Calu3 (cell line): ENCODE measurements at regions of chr19 and their contacts with region 1.

Region 1: DNA sequence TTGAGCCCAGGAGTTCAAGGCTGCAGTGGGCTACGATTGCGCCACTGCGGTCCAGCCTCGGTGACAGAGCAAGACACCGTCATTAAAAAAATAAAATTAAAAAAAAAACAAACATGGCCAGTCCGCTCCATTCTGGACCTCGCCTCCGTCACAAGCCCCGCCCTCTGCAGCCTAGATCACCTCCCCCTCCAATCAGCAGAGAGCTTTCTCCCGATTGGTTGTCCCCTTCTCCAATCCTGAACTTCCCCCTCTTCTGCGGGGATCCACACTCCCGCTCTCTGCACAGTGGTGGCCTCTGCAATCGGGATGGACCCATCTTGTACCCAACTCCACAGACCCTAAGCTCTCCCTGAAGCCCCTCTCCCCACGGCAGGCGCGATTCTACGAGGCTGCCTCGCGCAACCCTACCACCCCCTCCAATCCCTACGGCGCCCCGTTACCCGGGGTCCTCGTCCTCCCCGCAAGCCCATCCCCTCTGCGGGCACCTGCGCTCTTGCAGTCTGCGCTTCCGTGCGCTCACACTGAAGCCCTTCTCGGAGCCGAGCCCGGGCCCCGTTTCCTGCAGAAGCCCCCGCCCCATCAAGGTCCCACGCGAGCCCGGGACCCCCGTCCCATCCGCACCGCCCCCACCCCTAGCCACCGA is 540 bp downstream of the TMEM160 start:
- DNase-seq: peak; percentile 92
- H3K4me3 Mint-ChIP-seq: peak overlapping the region; percentile 93
- H3K27ac Mint-ChIP-seq: peak overlapping the region; percentile 89
- H3K4me1 Mint-ChIP-seq: no peaks in the 10 kb centered on the region
- H3K27me3 Mint-ChIP-seq: peaks cover 16% of the 10 kb centered on the region
- CTCF ChIP-seq: no peak

Region 2: DNA sequence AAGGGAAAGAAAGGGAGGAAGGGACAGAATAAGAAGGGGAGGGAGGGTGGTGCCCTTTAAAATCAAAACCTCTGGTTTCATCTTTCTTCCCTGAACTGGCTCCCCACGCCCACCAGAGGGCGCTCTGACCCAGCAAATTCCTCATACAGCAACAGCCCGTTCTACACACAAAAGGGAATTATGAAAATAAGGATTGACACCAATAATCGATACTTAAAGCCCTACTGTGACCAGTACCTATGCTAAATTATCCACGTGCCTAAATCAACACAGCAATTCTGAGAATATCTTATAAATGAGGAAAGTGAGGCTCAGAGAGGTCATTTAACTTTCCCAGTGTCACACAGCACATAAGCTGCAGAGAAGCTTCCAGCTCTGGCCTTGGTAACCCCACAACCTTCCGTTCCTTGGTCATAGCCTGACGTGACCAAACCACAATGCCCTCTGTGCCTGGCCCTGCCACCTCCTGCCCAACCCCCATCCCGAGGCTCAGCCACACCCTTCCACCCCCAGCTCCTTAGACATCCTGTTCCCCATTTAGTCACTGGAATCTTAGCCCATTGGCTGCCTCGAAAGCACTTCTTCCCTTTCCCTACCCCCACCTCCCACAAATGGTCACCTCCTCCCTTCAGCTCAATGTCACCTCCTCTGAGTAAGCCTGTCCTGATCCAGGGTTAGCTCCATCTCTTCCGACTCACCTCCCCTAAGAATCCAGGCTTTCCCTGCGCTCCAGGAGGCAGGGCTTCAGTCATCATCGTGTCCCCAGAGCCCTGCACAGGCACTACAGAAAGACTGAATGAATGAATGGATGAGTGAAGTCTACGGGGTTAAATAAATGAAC is 518.0 kb before region 1 on chr19:
- CTCF ChIA-PET with region 1: interaction called, 10 read pairs
- intact Hi-C with region 1: no loop called
- DNase-seq: peak; percentile 82
- H3K4me3 Mint-ChIP-seq: no peak overlapping the region
- H3K27ac Mint-ChIP-seq: no peak overlapping the region
- H3K4me1 Mint-ChIP-seq: peaks cover 12% of the 10 kb centered on the region
- H3K27me3 Mint-ChIP-seq: peaks cover 78% of the 10 kb centered on the region
- CTCF ChIP-seq: peak; percentile 91

Region 3: GRCh38 chr19:47002107-47002766 is 45.6 kb before region 1 on chr19:
- CTCF ChIA-PET with region 1: interaction called, 10 read pairs
- intact Hi-C with region 1: no loop called
- DNase-seq: no peak
- H3K4me3 Mint-ChIP-seq: no peak overlapping the region
- H3K27ac Mint-ChIP-seq: no peak overlapping the region
- H3K4me1 Mint-ChIP-seq: no peaks in the 10 kb centered on the region
- H3K27me3 Mint-ChIP-seq: no peaks in the 10 kb centered on the region
- CTCF ChIP-seq: no peak